ENCODE measurements at regions of chr9 and their contacts with region 1.

Region 1: GRCh38 chr9:94783102-94783664 is 56.7 kb downstream of the AOPEP start:
- DNase-seq: peak; percentile 92 to 99
- ATAC-seq: peak; percentile 94 to 95
- H3K4me3 ChIP-seq: no peak overlapping the region
- H3K27ac ChIP-seq: peak overlapping the region; percentile 53 to 81 (median 74)
- H3K4me1 ChIP-seq: peaks cover 11 to 26% of the 10 kb centered on the region in 2 donors
- H3K27me3 ChIP-seq: no peaks in the 10 kb centered on the region
- CTCF ChIP-seq: peak; percentile 73 to 81 (median 79)
- POLR2A ChIP-seq: peak in 1 of 2 donors; percentile 32

Region 2: GRCh38 chr9:94726495-94727191 is 56.5 kb before region 1 on chr9 and contains the start of gene AOPEP:
- in situ Hi-C with region 1: no loop called
- intact Hi-C with region 1: loop called (anchors 2 kb)
- DNase-seq: peak; percentile 95 to 98
- ATAC-seq: peak; percentile 99 to 100
- H3K4me3 ChIP-seq: peak within 1 kb of the TSS; percentile 78 to 98 (median 88)
- H3K27ac ChIP-seq: peak within 1 kb of the TSS; percentile 87 to 95 (median 93)
- H3K4me1 ChIP-seq: peaks cover 10 to 12% of the 10 kb centered on the region in 2 donors
- H3K27me3 ChIP-seq: no peaks in the 10 kb centered on the region
- CTCF ChIP-seq: peak in 1 of 5 experiments; percentile 22
- POLR2A ChIP-seq: peak; percentile 75 to 76
- total RNA-seq, gene AOPEP: 56.5 to 160 (median 103) TPM

Region 3: GRCh38 chr9:94922098-94922607 is 139.0 kb after region 1 on chr9:
- in situ Hi-C with region 1: no loop called
- intact Hi-C with region 1: loop called (anchors 2 kb)
- DNase-seq: peak in 1 of 2 donors; percentile 41
- ATAC-seq: peak; percentile 24 to 49
- H3K4me3 ChIP-seq: no peak overlapping the region
- H3K27ac ChIP-seq: peak overlapping the region; percentile 38 to 65 (median 45)
- H3K4me1 ChIP-seq: peaks cover 22 to 32% of the 10 kb centered on the region in 2 donors
- H3K27me3 ChIP-seq: no peaks in the 10 kb centered on the region
- CTCF ChIP-seq: no peak
- POLR2A ChIP-seq: no peak

Region 4: GRCh38 chr9:95048225-95049087 is 265.3 kb after region 1 on chr9:
- in situ Hi-C with region 1: loop called in 1 of 4 experiments (anchors 25 kb)
- intact Hi-C with region 1: loop called (anchors 1 kb)
- DNase-seq: peak; percentile 57 to 62
- ATAC-seq: peak; percentile 50 to 65
- H3K4me3 ChIP-seq: peak overlapping the region; percentile 59 to 69 (median 64)
- H3K27ac ChIP-seq: peak overlapping the region; percentile 91 to 96 (median 92)
- H3K4me1 ChIP-seq: peaks cover 73 to 76% of the 10 kb centered on the region in 2 donors
- H3K27me3 ChIP-seq: no peaks in the 10 kb centered on the region
- CTCF ChIP-seq: no peak
- POLR2A ChIP-seq: peak; percentile 73 to 89

Region 5: DNA sequence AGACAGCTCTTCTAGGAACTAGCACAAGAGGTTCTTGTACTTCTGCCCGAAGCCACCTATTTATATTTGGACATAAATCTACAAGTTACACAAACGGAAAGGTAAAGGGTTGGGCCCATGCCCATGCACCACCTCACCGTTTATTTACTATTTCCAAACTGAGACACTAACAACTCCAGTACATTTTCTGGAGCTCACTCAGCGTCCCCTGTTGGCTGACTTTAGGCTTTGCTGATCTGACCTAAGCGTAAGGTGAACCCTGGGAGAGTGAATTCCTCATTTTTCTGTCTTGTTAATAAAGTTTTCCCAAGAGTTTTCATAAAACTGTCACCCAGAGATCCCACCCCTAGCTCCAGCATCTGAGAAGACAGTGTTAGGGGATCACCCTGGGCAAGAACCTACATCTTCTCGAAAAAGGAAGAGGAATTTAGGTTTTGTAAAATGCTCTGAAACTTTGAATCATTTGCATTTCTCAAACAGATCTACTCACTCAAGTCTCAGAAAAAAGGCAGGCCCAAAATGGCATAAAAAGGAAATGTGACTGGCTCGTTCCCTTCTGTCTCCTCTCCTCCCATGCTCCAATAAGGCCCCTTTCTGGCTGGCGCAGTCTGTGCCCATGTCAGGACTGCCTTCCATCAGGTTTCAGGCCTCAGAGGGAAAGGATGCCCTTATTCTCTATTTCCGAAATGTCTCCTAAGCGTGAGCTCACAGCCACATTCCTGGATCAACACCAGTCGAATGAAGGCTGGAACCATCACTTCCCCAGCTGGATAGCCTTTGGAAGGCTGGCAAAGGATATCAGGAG is 333.0 kb after region 1 on chr9:
- in situ Hi-C with region 1: loop called in 2 of 4 experiments (anchors 5 to 10 kb)
- intact Hi-C with region 1: loop called (anchors 5 kb)
- DNase-seq: no peak
- ATAC-seq: peak; percentile 61 to 63
- H3K4me3 ChIP-seq: no peak overlapping the region
- H3K27ac ChIP-seq: no peak overlapping the region
- H3K4me1 ChIP-seq: peaks cover under 1% of the 10 kb centered on the region in 2 donors
- H3K27me3 ChIP-seq: no peaks in the 10 kb centered on the region
- CTCF ChIP-seq: peak in 3 of 5 experiments; percentile 46 to 53 (median 49)
- POLR2A ChIP-seq: no peak

Measured in gastrocnemius medialis (tissue), 4 donors.